ENCODE measurements at regions of chr1 and their contacts with region 1.

Region 1: DNA sequence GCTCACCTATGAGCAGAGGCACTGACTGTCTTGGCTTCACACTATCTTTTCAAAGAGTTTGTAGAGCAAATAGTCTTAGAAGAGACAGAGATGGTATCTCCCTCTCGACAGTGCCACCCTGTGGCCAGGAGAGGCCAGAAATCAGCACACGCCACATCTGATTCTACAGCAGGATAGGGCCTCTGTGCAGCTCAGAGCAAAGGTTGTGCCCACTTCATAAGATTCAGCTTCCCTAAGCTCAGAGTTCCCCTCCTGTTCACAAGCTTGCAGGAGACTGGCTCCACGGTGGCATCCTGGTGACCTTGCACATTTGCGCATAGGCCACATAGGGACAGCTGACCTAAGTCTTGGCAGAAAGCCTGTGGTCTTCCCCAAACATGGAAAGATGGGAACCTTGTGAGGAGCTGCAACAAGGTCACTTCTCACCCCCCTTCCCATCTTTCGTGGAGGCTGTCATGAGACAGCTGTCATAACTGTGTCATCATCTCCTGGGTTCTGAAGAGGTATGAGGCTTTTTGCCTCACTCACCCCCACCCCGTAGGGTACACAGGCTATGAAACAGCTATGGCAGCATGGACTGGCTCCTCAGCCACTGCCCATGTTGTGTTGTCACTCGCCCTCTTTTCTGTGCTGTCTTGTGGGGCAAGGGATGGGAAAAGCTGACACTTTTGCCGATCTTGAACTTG is 3.0 kb downstream of the ITLN2 start:
- DNase-seq: peak; percentile 49 to 74 (median 55)
- H3K4me3 ChIP-seq: no peak overlapping the region
- H3K4me3 Mint-ChIP-seq: no peak overlapping the region
- H3K27ac ChIP-seq: no peak overlapping the region
- H3K27ac Mint-ChIP-seq: peak overlapping the region in 3 of 8 donors; percentile 12 to 36 (median 33)
- H3K4me1 ChIP-seq: peaks cover 3% of the 10 kb centered on the region
- H3K4me1 Mint-ChIP-seq: peaks cover 12 to 26% (median 23%) of the 10 kb centered on the region in 3 donors
- H3K27me3 ChIP-seq: no peaks in the 10 kb centered on the region
- H3K27me3 Mint-ChIP-seq: no peaks in the 10 kb centered on the region

Region 2: GRCh38 chr1:160761046-160761445 is 190.5 kb before region 1 on chr1:
- CTCF ChIA-PET with region 1: no interaction called
- POLR2A ChIA-PET with region 1: no interaction called
- DNase-seq: no peak
- H3K4me3 ChIP-seq: no peak overlapping the region
- H3K4me3 Mint-ChIP-seq: no peak overlapping the region
- H3K27ac ChIP-seq: no peak overlapping the region
- H3K27ac Mint-ChIP-seq: peak overlapping the region in 1 of 8 donors; percentile 47
- H3K4me1 ChIP-seq: peaks cover 16% of the 10 kb centered on the region
- H3K4me1 Mint-ChIP-seq: peaks cover 40 to 50% (median 45%) of the 10 kb centered on the region in 3 donors
- H3K27me3 ChIP-seq: no peaks in the 10 kb centered on the region
- H3K27me3 Mint-ChIP-seq: peaks cover 0 to 2% of the 10 kb centered on the region in 2 donors

Region 3: DNA sequence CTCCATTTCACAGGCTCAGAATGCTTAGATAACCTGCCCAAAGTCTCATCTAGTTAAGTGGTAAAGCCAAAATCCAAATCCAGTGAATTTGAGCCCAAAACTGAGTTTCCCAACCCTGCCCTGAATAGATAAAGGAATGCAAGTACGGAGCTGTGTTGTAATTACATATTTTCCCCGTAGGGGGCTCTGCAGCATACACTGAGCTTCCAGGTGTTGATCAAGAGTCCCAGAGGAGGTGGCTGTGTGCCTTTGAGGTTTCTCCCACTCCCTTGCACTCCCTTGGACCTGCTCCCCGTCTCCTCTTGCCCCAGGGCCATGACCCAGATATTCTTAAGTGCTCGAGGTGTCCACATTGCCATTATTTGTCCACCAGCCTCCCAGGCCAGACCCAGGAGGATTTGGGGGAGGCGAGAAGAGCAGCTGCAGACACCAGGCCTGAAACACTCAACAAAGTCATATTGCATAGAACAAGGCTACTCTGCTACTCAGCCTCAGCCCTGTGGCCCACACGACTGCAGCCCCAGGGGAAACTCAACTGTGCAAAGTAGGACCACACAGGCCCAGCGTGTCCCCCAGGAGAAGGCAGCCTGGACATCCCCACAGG is 174.0 kb before region 1 on chr1:
- CTCF ChIA-PET with region 1: interaction called, 77 read pairs
- POLR2A ChIA-PET with region 1: interaction called, 3 read pairs
- DNase-seq: peak in 4 of 5 donors; percentile 31 to 64 (median 62)
- H3K4me3 ChIP-seq: no peak overlapping the region
- H3K4me3 Mint-ChIP-seq: peak overlapping the region in 1 of 7 donors; percentile 21
- H3K27ac ChIP-seq: no peak overlapping the region
- H3K27ac Mint-ChIP-seq: peak overlapping the region in 3 of 8 donors; percentile 45 to 90 (median 70)
- H3K4me1 ChIP-seq: peaks cover 7% of the 10 kb centered on the region
- H3K4me1 Mint-ChIP-seq: peaks cover 16 to 27% (median 26%) of the 10 kb centered on the region in 3 donors
- H3K27me3 ChIP-seq: no peaks in the 10 kb centered on the region
- H3K27me3 Mint-ChIP-seq: no peaks in the 10 kb centered on the region

Region 4: DNA sequence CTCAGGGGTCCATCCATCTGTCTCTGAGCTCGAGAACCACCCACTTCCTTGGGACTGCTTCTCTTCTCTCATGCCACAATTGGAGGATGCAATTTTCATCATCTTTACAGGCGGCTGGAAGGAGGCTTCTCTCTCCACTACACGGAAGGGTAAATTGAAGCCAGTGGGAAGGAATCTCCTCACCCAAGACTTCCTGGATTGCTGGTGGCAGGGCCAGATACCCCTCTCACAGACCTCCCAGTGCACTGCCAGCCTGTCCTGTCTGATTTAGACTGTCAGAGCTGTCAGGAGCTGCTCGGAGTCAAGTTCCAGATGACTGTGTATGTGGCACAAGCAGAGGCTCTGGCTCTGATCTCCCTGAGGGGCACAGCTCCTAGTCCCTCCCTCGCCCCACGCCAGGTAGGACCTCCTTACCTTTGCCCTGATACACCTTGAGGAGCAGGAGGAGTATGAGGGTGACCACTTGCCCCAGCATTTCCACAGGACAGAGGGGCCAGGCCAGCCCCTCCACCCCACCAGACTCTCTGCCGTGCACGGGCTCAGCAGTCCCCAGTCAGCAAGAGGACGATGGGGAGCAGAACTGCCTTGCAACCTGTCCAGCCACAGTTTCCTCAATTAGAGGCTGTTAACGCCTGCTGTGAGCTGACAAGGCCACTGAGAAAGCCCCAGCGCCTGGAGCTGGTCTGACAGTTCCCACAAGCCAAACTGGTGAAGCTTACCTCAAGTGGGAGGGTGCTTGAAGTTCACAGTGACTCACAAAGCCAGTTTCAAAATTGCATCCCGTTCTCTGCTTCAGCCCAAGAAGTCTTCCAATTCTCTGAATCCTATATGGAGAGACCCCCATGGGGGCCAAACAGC is 89.2 kb before region 1 on chr1 and contains the start of gene CD244:
- CTCF ChIA-PET with region 1: interaction called, 12 read pairs
- POLR2A ChIA-PET with region 1: no interaction called
- DNase-seq: peak in 4 of 5 donors; percentile 46 to 83 (median 59)
- H3K4me3 ChIP-seq: peak within 1 kb of the TSS; percentile 27
- H3K4me3 Mint-ChIP-seq: peak within 1 kb of the TSS; percentile 87 to 98 (median 91)
- H3K27ac ChIP-seq: no peak within 1 kb of the TSS
- H3K27ac Mint-ChIP-seq: peak within 1 kb of the TSS; percentile 77 to 98 (median 94)
- H3K4me1 ChIP-seq: peaks cover 13% of the 10 kb centered on the region
- H3K4me1 Mint-ChIP-seq: peaks cover 50 to 58% (median 56%) of the 10 kb centered on the region in 3 donors
- H3K27me3 ChIP-seq: no peaks in the 10 kb centered on the region
- H3K27me3 Mint-ChIP-seq: peaks cover 0 to 1% of the 10 kb centered on the region in 2 donors
- total RNA-seq, gene CD244: 1.8 to 1.9 TPM

Region 5: GRCh38 chr1:161165742-161166668 is 214.4 kb after region 1 on chr1 and contains the start of gene PPOX:
- CTCF ChIA-PET with region 1: no interaction called
- POLR2A ChIA-PET with region 1: no interaction called
- DNase-seq: peak; percentile 88 to 97 (median 93)
- H3K4me3 ChIP-seq: peak within 1 kb of the TSS; percentile 81
- H3K4me3 Mint-ChIP-seq: peak within 1 kb of the TSS; percentile 87 to 96 (median 93)
- H3K27ac ChIP-seq: peak within 1 kb of the TSS; percentile 95
- H3K27ac Mint-ChIP-seq: peak within 1 kb of the TSS; percentile 96 to 100 (median 99)
- H3K4me1 ChIP-seq: peaks cover 27% of the 10 kb centered on the region
- H3K4me1 Mint-ChIP-seq: peaks cover 43 to 76% (median 66%) of the 10 kb centered on the region in 3 donors
- H3K27me3 ChIP-seq: no peaks in the 10 kb centered on the region
- H3K27me3 Mint-ChIP-seq: no peaks in the 10 kb centered on the region
- total RNA-seq, gene PPOX: 24.4 to 31.3 TPM